ENCODE measurements at regions of chr1 and their contacts with region 1.

Region 1: DNA sequence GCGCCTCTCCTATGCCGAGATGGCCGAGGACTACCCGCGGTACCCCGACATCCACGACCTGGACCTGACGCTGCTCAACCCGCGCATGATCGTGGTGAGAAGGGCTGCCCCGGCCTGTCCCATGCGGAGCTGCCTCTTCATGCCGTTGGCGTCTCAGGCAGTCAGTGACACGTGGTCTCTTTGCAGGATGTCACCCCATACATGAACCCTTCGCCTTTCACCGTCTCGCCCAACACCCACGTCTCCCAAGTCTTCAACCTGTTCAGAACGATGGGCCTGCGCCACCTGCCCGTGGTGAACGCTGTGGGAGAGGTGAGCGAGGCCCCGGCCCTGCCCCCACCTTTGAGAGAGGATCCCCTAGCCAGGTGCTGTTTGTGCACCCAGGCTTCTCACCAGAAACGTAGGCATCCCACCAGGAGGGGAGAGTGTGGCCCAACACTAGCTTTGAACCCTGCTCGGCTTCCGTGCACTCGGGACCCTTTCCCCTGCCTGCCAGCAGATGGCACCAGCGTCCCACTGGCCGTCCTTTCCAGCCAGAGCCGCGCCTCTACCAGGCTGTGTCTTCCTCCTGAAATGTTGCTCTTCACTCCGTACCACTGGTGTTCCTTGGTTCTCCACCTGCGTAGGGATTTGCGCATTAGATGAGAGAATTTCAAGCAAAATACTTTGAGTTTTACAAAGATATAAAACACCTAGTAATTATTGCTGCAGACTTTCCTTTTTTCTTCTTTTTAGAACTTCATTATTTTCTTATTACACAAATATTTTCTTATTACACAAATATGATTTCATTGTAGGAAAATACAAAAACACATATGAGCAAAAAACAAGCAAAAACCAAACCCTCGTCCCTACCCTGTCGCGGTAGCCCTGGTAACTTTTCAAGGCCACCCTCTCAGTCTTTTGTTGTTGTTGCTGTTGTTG is 9.0 kb downstream of the NPPA start:
- DNase-seq: peak; percentile 84
- ATAC-seq: peak; percentile 94
- H3K4me3 Mint-ChIP-seq: no peak overlapping the region
- H3K27ac Mint-ChIP-seq: no peak overlapping the region; the same call in 1 of the 2 replicates
- H3K4me1 Mint-ChIP-seq: no peaks in the 10 kb centered on the region
- H3K27me3 Mint-ChIP-seq: no peaks in the 10 kb centered on the region
- CTCF ChIP-seq: peak; percentile 89

Region 2: DNA sequence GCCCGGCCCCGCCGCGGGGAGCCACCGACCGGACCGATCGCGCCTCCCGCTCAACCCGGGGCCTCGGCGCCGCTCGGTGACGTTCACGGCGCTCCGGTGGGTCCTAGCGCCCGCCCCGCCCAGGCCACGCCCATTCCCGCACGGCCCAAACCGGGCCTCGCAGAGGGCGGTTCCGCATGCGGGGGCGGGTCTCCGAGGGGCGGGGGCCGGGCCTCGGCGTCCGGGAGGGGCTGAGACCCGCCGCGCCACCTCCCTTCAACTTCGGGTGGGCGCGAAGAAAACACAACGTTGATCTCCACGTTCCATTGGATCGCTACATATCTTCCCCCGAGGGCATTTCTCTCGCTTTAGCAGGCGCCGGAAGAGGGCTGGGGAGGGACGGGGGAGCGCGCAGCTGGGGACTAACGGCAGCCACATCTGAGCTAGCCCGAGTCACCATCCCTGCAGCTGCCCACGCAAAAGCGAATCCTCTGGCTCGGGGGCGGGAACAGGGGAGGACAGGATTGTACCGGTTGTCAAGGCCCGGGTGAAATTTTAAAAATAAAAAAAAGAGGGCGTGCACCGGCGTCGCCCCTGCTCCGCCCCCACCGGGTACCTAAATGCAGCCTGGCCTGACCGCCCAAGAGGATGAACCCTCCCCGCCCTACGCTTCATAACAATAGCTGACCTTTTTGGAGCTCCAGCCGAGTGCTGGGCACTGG is 157.4 kb before region 1 on chr1 and contains the start of gene MAD2L2:
- CTCF ChIA-PET with region 1: no interaction called
- POLR2A ChIA-PET with region 1: no interaction called
- DNase-seq: peak; percentile 86
- ATAC-seq: peak; percentile 54
- H3K4me3 Mint-ChIP-seq: peak within 1 kb of the TSS; percentile 83
- H3K27ac Mint-ChIP-seq: peak within 1 kb of the TSS; percentile 100
- H3K4me1 Mint-ChIP-seq: peaks cover 61% of the 10 kb centered on the region
- H3K27me3 Mint-ChIP-seq: no peaks in the 10 kb centered on the region
- CTCF ChIP-seq: no peak
- total RNA-seq, gene MAD2L2: 283 to 312 TPM (median 305 TPM) in 3 replicates

Region 3: GRCh38 chr1:11805447-11806306 is 32.9 kb before region 1 on chr1 and contains the starts of genes CLCN6 and MTHFR:
- CTCF ChIA-PET with region 1: interaction called, 10 read pairs
- POLR2A ChIA-PET with region 1: no interaction called
- DNase-seq: peak; percentile 100
- ATAC-seq: peak; percentile 83
- H3K4me3 Mint-ChIP-seq: peak within 1 kb of the TSS; percentile 99
- H3K27ac Mint-ChIP-seq: peak within 1 kb of the TSS; percentile 99
- H3K4me1 Mint-ChIP-seq: peaks cover 57% of the 10 kb centered on the region
- H3K27me3 Mint-ChIP-seq: no peaks in the 10 kb centered on the region
- CTCF ChIP-seq: no peak
- total RNA-seq, gene CLCN6: 20.0 to 22.3 TPM (median 20.8 TPM) in 3 replicates
- total RNA-seq, gene MTHFR: 19.4 to 23.4 TPM (median 22.6 TPM) in 3 replicates

Region 4: GRCh38 chr1:11882814-11883538 is 44.4 kb after region 1 on chr1:
- CTCF ChIA-PET with region 1: interaction called, 19 read pairs
- POLR2A ChIA-PET with region 1: no interaction called
- DNase-seq: peak; percentile 66
- ATAC-seq: peak; percentile 84
- H3K4me3 Mint-ChIP-seq: no peak overlapping the region
- H3K27ac Mint-ChIP-seq: peak overlapping the region; percentile 58; the same call in 1 of the 2 replicates
- H3K4me1 Mint-ChIP-seq: peaks cover 8% of the 10 kb centered on the region
- H3K27me3 Mint-ChIP-seq: no peaks in the 10 kb centered on the region
- CTCF ChIP-seq: no peak

Region 5: DNA sequence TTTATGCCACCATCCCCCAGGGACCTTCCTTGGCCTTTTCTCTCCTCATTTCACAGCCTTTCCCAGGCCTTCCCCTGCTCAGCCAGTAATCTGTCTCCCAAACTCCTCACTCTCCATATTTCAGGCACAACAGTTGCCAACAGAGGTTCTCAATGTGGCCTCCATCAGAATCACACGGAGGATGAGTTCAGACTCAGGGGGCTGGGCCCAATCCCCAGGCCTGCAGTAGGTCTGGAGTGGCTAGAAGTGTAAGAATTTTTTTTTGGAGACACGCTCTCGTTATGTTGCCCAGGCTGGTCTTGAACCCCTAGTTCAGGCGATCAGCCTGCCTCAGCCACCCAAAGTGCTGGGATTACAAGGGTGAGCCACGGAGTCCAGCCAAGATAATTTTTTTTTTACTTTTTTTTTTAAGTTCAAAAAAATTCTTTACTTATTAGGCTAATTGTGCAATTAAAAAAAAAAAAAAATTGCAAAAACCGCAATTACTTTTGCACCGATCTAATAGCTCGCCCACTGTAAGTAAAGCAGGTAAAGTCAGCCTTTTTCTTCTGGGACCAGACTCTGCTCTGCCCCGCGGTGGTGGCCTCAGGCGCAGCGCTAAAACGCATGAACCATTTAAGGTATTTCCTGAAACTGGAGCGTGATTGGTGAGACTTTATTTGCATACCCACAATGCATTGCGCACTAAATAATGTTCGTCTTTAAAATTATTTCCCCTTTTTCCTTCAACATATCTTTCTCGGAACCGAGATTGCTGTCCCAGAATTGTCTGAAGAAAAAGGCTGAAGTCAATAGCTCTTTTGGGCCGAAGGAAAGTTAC is 68.9 kb after region 1 on chr1:
- CTCF ChIA-PET with region 1: interaction called, 13 read pairs
- POLR2A ChIA-PET with region 1: interaction called, 7 read pairs
- DNase-seq: peak; percentile 86
- ATAC-seq: peak; percentile 54
- H3K4me3 Mint-ChIP-seq: peak overlapping the region; percentile 85
- H3K27ac Mint-ChIP-seq: peak overlapping the region; percentile 100
- H3K4me1 Mint-ChIP-seq: peaks cover 9% of the 10 kb centered on the region
- H3K27me3 Mint-ChIP-seq: no peaks in the 10 kb centered on the region; the same call in 1 of the 2 replicates
- CTCF ChIP-seq: no peak

Region 6: DNA sequence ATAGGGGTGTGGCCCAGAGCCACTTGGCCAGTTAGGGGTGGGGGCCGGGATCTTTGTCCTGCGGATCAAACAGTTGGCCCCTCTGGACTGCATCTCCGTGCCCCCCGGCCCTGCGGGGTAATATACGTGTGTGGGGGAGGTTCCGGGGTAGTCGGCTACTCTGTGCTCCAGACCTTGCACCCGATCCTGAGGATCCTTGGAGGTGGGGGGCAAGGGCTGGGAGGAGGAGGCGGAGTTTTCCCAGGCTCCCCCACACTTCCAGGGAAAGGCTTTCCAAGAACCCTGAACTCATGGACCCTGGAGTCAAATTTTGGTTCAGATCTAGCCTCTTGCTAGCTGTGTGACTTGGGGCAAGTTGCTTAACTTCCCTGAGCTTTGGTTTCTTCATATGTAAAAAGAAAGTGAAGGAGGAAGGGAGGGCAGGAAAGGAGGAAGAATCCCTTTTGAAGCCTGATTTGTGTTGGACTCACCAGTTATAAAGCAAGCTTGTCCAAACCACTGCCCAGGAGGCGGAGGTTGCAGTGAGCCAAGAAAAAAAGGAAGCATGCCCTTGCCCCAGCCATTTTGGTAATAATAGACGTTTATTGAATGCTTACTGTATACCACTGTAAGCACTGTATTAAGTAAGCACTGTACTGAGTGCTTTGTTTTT is 181.4 kb after region 1 on chr1:
- CTCF ChIA-PET with region 1: interaction called, 12 read pairs
- POLR2A ChIA-PET with region 1: no interaction called
- DNase-seq: no peak
- ATAC-seq: no peak
- H3K4me3 Mint-ChIP-seq: peak overlapping the region; percentile 88
- H3K27ac Mint-ChIP-seq: peak overlapping the region; percentile 79
- H3K4me1 Mint-ChIP-seq: peaks cover 4% of the 10 kb centered on the region
- H3K27me3 Mint-ChIP-seq: no peaks in the 10 kb centered on the region; the same call in 1 of the 2 replicates
- CTCF ChIP-seq: no peak

Measured in WTC11 (cell line).